ENCODE measurements at regions of chr17 and their contacts with region 1.

Region 1: GRCh38 chr17:53176629-53177028 is 646.1 kb upstream of the KIF2B start:
- DNase-seq: no peak
- ATAC-seq: no peak
- H3K4me3 ChIP-seq: no peak overlapping the region
- H3K27ac ChIP-seq: no peak overlapping the region
- H3K4me1 ChIP-seq: no peaks in the 10 kb centered on the region
- H3K27me3 ChIP-seq: no peaks in the 10 kb centered on the region

Region 2: DNA sequence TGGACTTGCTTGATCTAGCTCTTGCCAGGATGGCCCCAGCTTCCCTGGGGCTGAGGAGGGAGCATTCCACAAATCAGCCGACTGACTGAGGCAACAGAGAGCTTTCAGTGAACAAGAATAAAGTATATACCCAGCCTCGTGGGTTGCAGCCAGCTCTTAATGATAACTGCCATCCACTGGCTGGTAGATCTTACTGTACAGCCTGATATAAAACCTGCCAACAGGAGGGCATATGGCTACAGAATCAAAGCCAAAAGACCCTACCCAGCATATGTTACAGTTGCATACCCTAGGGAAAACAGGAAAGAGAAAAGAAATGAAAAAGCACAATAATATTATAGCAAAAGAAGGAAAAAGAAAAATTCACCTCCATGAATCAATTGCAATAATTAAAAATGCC is 129.8 kb before region 1 on chr17:
- intact Hi-C with region 1: no loop called
- DNase-seq: no peak
- ATAC-seq: no peak
- H3K4me3 ChIP-seq: no peak overlapping the region
- H3K27ac ChIP-seq: no peak overlapping the region
- H3K4me1 ChIP-seq: no peaks in the 10 kb centered on the region
- H3K27me3 ChIP-seq: no peaks in the 10 kb centered on the region

Region 3: DNA sequence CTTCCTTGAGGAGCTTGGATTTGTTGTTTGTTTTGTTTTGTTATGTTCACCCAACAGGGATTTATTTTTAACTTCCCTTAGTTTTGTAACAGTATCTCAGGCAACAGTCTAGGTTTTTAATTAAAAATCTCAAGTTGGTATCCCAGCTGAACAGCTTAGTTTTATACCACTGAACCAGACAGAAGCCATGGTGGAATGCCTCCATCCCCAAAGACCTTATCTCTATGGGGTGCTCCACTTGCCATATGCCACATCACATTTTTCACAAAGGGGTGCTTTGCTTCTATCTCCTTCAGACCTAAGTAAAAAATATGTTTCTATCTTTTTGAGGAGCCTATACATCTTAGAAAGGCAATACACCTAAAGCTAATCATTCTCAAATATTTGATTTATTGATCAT is 69.7 kb before region 1 on chr17:
- intact Hi-C with region 1: no loop called
- DNase-seq: no peak
- ATAC-seq: no peak
- H3K4me3 ChIP-seq: no peak overlapping the region
- H3K27ac ChIP-seq: no peak overlapping the region
- H3K4me1 ChIP-seq: no peaks in the 10 kb centered on the region
- H3K27me3 ChIP-seq: no peaks in the 10 kb centered on the region

Region 4: GRCh38 chr17:53191878-53192277 is 15.2 kb after region 1 on chr17:
- intact Hi-C with region 1: loop called in 1 of 4 experiments (anchors 1 kb)
- DNase-seq: no peak
- ATAC-seq: no peak
- H3K4me3 ChIP-seq: no peak overlapping the region
- H3K27ac ChIP-seq: no peak overlapping the region
- H3K4me1 ChIP-seq: no peaks in the 10 kb centered on the region
- H3K27me3 ChIP-seq: no peaks in the 10 kb centered on the region

Region 5: GRCh38 chr17:53249036-53249435 is 72.4 kb after region 1 on chr17:
- intact Hi-C with region 1: no loop called
- DNase-seq: no peak
- ATAC-seq: no peak
- H3K4me3 ChIP-seq: no peak overlapping the region
- H3K27ac ChIP-seq: no peak overlapping the region
- H3K4me1 ChIP-seq: no peaks in the 10 kb centered on the region
- H3K27me3 ChIP-seq: no peaks in the 10 kb centered on the region

Measured in right cardiac atrium (tissue), 5 donors.